ENCODE measurements at regions of chr12 and their contacts with region 1.

Region 1: DNA sequence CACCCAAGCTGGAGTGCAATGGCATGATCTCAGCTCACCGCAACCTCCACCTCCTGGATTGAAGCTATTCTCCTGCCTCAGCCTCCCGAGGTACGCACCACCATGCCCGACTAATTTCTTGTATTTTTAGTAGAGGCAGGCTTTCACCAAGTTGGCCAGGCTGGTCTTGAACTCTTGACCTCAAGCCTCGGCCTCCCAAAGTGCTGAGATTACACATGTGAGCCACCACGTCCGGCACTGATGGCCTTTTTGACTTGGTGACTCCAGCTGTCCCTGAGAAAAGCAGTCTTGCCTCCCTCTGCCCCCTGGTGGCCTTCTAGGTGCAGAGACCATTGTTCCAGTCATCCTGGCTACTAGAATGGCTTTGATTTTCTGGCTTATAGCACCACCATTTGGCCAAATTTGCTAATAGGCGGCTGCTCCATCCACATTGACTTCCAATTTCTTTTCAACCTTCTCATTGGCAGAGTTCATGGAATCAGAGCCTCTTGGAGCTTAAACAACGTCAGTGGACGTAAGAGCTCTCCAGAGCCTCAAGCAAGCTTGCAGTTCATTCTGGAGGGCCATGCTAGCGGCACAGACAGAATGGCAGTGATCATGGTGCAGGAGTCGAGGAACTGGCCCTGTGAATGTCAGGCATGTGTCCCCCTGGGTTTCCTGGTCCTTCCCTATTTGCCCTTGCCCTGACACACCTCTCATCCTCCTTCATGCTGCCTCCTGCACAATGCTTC is 25.4 kb upstream of the EIF4B start:
- DNase-seq: peak; percentile 82 to 88
- H3K4me3 ChIP-seq: no peak overlapping the region
- H3K27ac ChIP-seq: no peak overlapping the region
- H3K4me1 ChIP-seq: no peaks in the 10 kb centered on the region
- H3K27me3 ChIP-seq: no peaks in the 10 kb centered on the region
- CTCF ChIP-seq: peak; percentile 92 to 100 (median 98)
- POLR2A ChIP-seq: no peak

Region 2: GRCh38 chr12:52585946-52586345 is 394.9 kb before region 1 on chr12:
- intact Hi-C with region 1: loop called (anchors 5 kb)
- DNase-seq: no peak
- H3K4me3 ChIP-seq: no peak overlapping the region
- H3K27ac ChIP-seq: no peak overlapping the region
- H3K4me1 ChIP-seq: no peaks in the 10 kb centered on the region
- H3K27me3 ChIP-seq: no peaks in the 10 kb centered on the region
- CTCF ChIP-seq: no peak
- POLR2A ChIP-seq: no peak

Region 3: GRCh38 chr12:52884526-52885293 is 96.1 kb before region 1 on chr12:
- intact Hi-C with region 1: loop called (anchors 5 kb)
- DNase-seq: peak; percentile 72 to 74
- H3K4me3 ChIP-seq: no peak overlapping the region
- H3K27ac ChIP-seq: no peak overlapping the region
- H3K4me1 ChIP-seq: no peaks in the 10 kb centered on the region
- H3K27me3 ChIP-seq: no peaks in the 10 kb centered on the region
- CTCF ChIP-seq: peak; percentile 85 to 97 (median 94)
- POLR2A ChIP-seq: no peak